IMR-90 (cell line): ENCODE measurements at regions of chr1 and their contacts with region 1.

Region 1: GRCh38 chr1:37682334-37682987 is 9.9 kb upstream of the CDCA8 start:
- DNase-seq: peak; percentile 61
- ATAC-seq: peak; percentile 98
- H3K4me3 ChIP-seq: no peak overlapping the region
- H3K27ac ChIP-seq: no peak overlapping the region
- H3K4me1 ChIP-seq: 0 out of 2 replicates have a peak, but pooled peaks cover 1% of the 10 kb centered on the region
- H3K27me3 ChIP-seq: peaks cover 4% of the 10 kb centered on the region
- CTCF ChIP-seq: peak; percentile 91
- POLR2A ChIP-seq: peak; percentile 37; the same call in 1 of the 2 replicates
- RAD21 ChIP-seq: peak; percentile 88

Region 2: DNA sequence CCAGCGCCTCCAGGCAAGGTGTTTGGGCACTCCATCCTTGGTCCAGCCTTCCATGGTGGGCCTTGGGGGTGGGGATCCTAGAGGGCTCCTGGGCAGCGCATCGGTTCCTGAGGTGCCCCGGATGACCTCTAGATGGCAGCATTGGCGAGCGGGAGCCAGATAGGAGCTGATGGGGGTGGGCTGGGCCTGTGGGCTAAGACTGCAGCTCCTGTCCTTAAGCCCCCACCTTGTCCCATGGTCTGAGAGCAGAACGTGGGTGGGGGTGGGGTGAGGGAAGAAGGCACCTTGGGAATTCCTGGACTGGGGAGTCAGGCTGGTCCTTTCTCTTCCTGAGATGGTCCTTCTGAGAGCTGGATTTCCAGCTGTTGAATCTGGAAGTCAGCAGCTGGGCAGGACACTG is 1106.3 kb before region 1 on chr1:
- CTCF ChIA-PET with region 1: no interaction called
- POLR2A ChIA-PET with region 1: no interaction called
- dilution Hi-C with region 1: no loop called
- in situ Hi-C with region 1: no loop called
- intact Hi-C with region 1: loop called (anchors 5 kb)
- DNase-seq: peak; percentile 19
- ATAC-seq: peak; percentile 97
- H3K4me3 ChIP-seq: no peak overlapping the region
- H3K27ac ChIP-seq: no peak overlapping the region
- H3K4me1 ChIP-seq: no peaks in the 10 kb centered on the region
- H3K27me3 ChIP-seq: peaks cover 6% of the 10 kb centered on the region
- CTCF ChIP-seq: peak; percentile 78
- POLR2A ChIP-seq: no peak
- RAD21 ChIP-seq: peak; percentile 82

Region 3: GRCh38 chr1:37071829-37072228 is 610.6 kb before region 1 on chr1:
- CTCF ChIA-PET with region 1: no interaction called
- POLR2A ChIA-PET with region 1: no interaction called
- dilution Hi-C with region 1: no loop called
- in situ Hi-C with region 1: no loop called
- intact Hi-C with region 1: no loop called
- DNase-seq: no peak
- ATAC-seq: no peak
- H3K4me3 ChIP-seq: no peak overlapping the region
- H3K27ac ChIP-seq: no peak overlapping the region
- H3K4me1 ChIP-seq: no peaks in the 10 kb centered on the region
- H3K27me3 ChIP-seq: no peaks in the 10 kb centered on the region
- CTCF ChIP-seq: no peak
- POLR2A ChIP-seq: no peak
- RAD21 ChIP-seq: no peak

Region 4: GRCh38 chr1:37449936-37450335 is 232.5 kb before region 1 on chr1:
- CTCF ChIA-PET with region 1: interaction called, 3 read pairs
- POLR2A ChIA-PET with region 1: no interaction called
- dilution Hi-C with region 1: no loop called
- in situ Hi-C with region 1: loop called (anchors 10 kb)
- intact Hi-C with region 1: loop called (anchors 1 kb)
- DNase-seq: no peak
- ATAC-seq: no peak
- H3K4me3 ChIP-seq: no peak overlapping the region
- H3K27ac ChIP-seq: no peak overlapping the region
- H3K4me1 ChIP-seq: peaks cover under 1% of the 10 kb centered on the region
- H3K27me3 ChIP-seq: peaks cover 15% of the 10 kb centered on the region
- CTCF ChIP-seq: no peak
- POLR2A ChIP-seq: no peak
- RAD21 ChIP-seq: no peak

Region 5: GRCh38 chr1:37474046-37474759 is 208.3 kb before region 1 on chr1 and contains the start of gene ZC3H12A:
- CTCF ChIA-PET with region 1: interaction called, 3 read pairs
- POLR2A ChIA-PET with region 1: no interaction called
- dilution Hi-C with region 1: no loop called
- in situ Hi-C with region 1: no loop called
- intact Hi-C with region 1: loop called (anchors 5 kb)
- DNase-seq: peak; percentile 86
- ATAC-seq: peak; percentile 73
- H3K4me3 ChIP-seq: peak within 1 kb of the TSS; percentile 95
- H3K27ac ChIP-seq: peak within 1 kb of the TSS; percentile 91
- H3K4me1 ChIP-seq: peaks cover 53% of the 10 kb centered on the region
- H3K27me3 ChIP-seq: no peaks in the 10 kb centered on the region
- CTCF ChIP-seq: no peak
- POLR2A ChIP-seq: peak; percentile 99
- RAD21 ChIP-seq: no peak
- total RNA-seq, gene ZC3H12A: 3.1 and 3.8 TPM in 2 replicates

Region 6: DNA sequence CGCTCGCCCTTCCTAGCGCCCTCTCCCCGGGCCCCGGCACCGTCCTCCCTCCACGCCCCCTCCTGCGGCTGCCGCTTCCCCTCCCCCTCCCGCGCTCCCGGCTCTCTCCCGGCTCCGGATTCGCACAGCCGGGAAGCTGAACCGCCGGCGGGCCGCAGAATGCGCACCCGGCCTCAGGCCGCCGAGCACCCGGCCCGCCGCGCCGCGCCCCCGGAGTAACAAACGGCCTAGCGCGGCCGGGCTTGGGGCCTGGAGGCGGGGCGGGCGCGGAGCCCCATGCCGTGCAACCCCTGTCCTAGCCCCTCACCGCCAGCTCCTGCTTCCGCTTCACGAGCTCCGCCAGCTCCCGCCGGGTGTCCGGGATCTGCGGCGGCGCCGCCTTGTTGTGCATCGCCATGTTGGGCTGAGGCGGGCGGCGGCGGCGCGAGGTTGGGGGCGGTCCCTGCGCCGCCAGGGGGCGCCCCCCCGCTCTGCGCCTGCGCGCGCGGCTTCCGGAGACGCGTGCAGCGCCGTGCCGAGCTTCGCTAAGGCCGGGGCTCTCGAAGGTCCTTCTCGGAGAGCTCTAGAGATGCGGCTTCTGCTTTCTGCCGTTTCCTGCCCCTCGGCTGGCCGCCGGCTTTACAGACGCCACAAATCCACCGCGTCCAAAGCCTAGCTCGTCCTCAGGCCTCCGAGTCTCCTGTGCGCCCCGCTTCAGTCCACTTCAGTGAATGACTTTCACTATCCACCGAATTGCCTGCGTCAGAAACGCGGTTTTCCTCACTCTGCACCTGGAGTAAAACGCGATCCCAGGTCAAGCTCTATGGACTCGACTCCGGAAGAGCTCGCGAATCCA is 167.9 kb before region 1 on chr1 and contains the start of gene MEAF6:
- CTCF ChIA-PET with region 1: no interaction called
- POLR2A ChIA-PET with region 1: no interaction called
- dilution Hi-C with region 1: no loop called
- in situ Hi-C with region 1: no loop called
- intact Hi-C with region 1: loop called (anchors 2 kb)
- DNase-seq: peak; percentile 77
- ATAC-seq: peak; percentile 98
- H3K4me3 ChIP-seq: peak within 1 kb of the TSS; percentile 71
- H3K27ac ChIP-seq: peak within 1 kb of the TSS; percentile 93
- H3K4me1 ChIP-seq: peaks cover 2% of the 10 kb centered on the region; the same call in 1 of the 2 replicates
- H3K27me3 ChIP-seq: no peaks in the 10 kb centered on the region
- CTCF ChIP-seq: peak; percentile 88
- POLR2A ChIP-seq: peak; percentile 78
- RAD21 ChIP-seq: no peak
- total RNA-seq, gene MEAF6: 36.2 and 44.4 TPM in 2 replicates